Dendritic cell treated with granulocyte-macrophage colony-stimulating factor and Interleukin-4, amounts not matched to agents 40 ng/mL and 50 ng/mL, for 4 days (primary cell): ENCODE measurements at regions of chr18 and their contacts with region 1.

Region 1: GRCh38 chr18:63253428-63254372 is 65.9 kb downstream of the BCL2 start:
- H3K4me3 Mint-ChIP-seq: no peak overlapping the region
- H3K27ac Mint-ChIP-seq: no peak overlapping the region
- H3K4me1 Mint-ChIP-seq: peaks cover 43% of the 10 kb centered on the region
- H3K27me3 Mint-ChIP-seq: no peaks in the 10 kb centered on the region

Region 2: GRCh38 chr18:63213331-63213900 is 40.3 kb before region 1 on chr18:
- intact Hi-C with region 1: loop called (anchors 5 kb)
- H3K4me3 Mint-ChIP-seq: no peak overlapping the region
- H3K27ac Mint-ChIP-seq: peak overlapping the region; percentile 24
- H3K4me1 Mint-ChIP-seq: peaks cover 34% of the 10 kb centered on the region
- H3K27me3 Mint-ChIP-seq: peaks cover 5% of the 10 kb centered on the region